Right cardiac atrium (tissue), 5 donors: ENCODE measurements at regions of chr3 and their contacts with region 1.

Region 1: DNA sequence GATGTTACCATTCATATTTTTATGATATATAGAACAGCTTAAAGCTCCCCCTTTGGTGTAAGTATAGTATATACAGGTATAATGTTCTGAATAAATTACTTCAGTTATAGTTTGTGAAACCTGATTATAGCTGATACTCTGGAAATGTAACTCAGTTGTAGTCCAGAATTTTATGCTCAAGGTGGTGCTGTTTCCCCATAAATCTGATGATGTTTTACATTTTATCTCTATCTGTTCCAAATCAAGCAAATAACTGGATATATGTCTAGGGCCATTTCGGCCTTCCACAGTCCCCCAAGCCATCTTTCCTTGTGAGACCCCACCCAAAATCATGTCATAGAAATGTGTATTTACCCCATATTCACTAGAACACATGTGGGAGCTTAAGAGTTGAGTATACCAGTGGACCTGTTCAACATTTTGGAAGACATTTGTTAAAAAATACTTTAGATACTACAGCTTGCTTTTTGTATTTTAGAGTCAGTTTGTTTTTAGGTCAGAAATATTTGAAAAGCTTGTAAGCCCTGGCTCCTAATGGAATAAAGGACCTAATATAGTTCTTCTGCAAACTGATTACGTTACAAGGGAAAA is 107.1 kb downstream of the ATG7 start:
- DNase-seq: no peak
- ATAC-seq: peak; percentile 73 to 75
- H3K4me3 ChIP-seq: peak overlapping the region; percentile 44
- H3K27ac ChIP-seq: no peak overlapping the region
- H3K4me1 ChIP-seq: peaks cover 3% of the 10 kb centered on the region
- H3K27me3 ChIP-seq: no peaks in the 10 kb centered on the region

Region 2: DNA sequence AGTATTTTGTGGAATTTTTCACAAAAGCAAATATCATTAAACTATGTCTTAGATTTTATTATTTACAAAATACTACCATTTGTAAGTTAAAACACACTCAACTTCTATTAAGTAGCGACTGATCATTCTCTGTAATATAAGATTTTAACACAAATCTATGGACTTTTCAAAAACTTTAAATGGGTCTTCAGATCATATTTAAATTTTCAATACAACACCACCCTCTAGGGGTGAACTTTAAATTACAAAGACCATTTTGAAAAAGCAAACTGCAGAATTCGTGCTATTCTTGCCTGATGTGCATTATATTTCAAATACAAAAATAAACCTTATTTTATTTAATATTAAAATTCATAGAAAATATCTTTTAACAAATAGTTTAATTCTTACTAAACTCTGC is 272.6 kb after region 1 on chr3:
- intact Hi-C with region 1: loop called (anchors 2 to 5 kb)
- DNase-seq: no peak
- ATAC-seq: no peak
- H3K4me3 ChIP-seq: no peak overlapping the region
- H3K27ac ChIP-seq: no peak overlapping the region
- H3K4me1 ChIP-seq: no peaks in the 10 kb centered on the region
- H3K27me3 ChIP-seq: no peaks in the 10 kb centered on the region